ENCODE measurements at regions of chr20 and their contacts with region 1.

Region 1: GRCh38 chr20:63707549-63708300 is at the starts of genes ARFRP1 and ZGPAT:
- DNase-seq: peak; percentile 94
- ATAC-seq: peak; percentile 89
- H3K4me3 Mint-ChIP-seq: peak within 1 kb of the TSS; percentile 95
- H3K27ac Mint-ChIP-seq: peak within 1 kb of the TSS; percentile 90
- H3K4me1 Mint-ChIP-seq: peaks cover 44% of the 10 kb centered on the region
- H3K27me3 Mint-ChIP-seq: no peaks in the 10 kb centered on the region
- total RNA-seq, gene ARFRP1: 36.4 to 52.0 TPM
- total RNA-seq, gene ZGPAT: 15.3 to 21.9 TPM

Region 2: GRCh38 chr20:63734111-63734945 is 26.6 kb after region 1 on chr20:
- CTCF ChIA-PET with region 1: interaction called, 14 read pairs
- POLR2A ChIA-PET with region 1: interaction called, 10 read pairs
- intact Hi-C with region 1: loop called (anchors 2 kb)
- DNase-seq: no peak
- ATAC-seq: no peak
- H3K4me3 Mint-ChIP-seq: no peak overlapping the region
- H3K27ac Mint-ChIP-seq: no peak overlapping the region
- H3K4me1 Mint-ChIP-seq: peaks cover 21% of the 10 kb centered on the region
- H3K27me3 Mint-ChIP-seq: no peaks in the 10 kb centered on the region

Region 3: GRCh38 chr20:63782051-63782471 is 74.3 kb after region 1 on chr20:
- CTCF ChIA-PET with region 1: interaction called, 3 read pairs
- POLR2A ChIA-PET with region 1: no interaction called
- intact Hi-C with region 1: loop called (anchors 1 to 5 kb)
- DNase-seq: peak; percentile 84
- ATAC-seq: peak; percentile 94
- H3K4me3 Mint-ChIP-seq: no peak overlapping the region
- H3K27ac Mint-ChIP-seq: peak overlapping the region; percentile 28
- H3K4me1 Mint-ChIP-seq: peaks cover 19% of the 10 kb centered on the region
- H3K27me3 Mint-ChIP-seq: no peaks in the 10 kb centered on the region

Region 4: DNA sequence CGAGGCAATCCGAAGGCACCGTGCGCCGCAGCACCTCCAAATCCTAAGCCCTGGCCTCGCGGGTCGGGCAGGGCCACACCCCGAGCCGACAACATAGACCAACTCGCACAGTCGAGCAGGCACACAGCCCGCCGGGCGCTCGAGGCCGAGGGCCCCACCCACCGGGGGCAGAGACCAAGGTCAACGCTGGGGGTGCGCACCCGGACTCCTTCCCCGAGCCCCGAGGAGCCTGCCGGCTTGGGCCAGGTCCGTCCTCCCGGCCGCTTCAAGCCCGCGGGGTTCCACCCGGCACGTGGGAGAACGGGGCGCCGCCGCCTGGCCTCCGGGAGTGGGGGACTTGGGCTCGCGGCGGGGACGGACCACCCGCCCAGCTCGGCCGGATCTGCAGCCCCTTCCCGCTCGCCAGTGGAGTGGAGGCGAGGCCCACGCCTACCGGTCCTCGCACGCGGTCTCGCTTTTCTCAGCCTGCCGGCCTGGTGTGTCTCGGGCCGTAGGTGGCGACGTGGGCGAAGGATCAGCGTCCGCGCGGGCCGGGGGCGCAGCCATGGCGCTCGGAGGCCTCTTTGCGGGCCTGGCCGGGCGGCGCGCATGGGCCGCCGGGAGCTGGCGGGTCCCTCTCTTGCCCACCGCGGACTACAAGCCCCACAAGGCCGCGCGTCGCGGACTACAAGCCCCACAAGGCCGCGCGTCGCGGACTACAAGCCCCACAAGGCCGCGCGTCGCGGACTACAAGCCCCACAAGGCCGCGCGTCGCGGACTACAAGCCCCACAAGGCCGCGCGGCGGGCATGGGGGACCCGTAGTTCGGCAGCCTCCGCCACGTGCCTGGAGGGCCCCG is 248.3 kb after region 1 on chr20 and contains the start of gene UCKL1:
- CTCF ChIA-PET with region 1: no interaction called
- POLR2A ChIA-PET with region 1: interaction called, 3 read pairs
- intact Hi-C with region 1: loop called in 1 of 2 experiments (anchors 2 kb)
- DNase-seq: peak; percentile 95
- ATAC-seq: peak; percentile 78
- H3K4me3 Mint-ChIP-seq: peak within 1 kb of the TSS; percentile 77
- H3K27ac Mint-ChIP-seq: peak within 1 kb of the TSS; percentile 89
- H3K4me1 Mint-ChIP-seq: peaks cover 37% of the 10 kb centered on the region
- H3K27me3 Mint-ChIP-seq: no peaks in the 10 kb centered on the region
- total RNA-seq, gene UCKL1: 28.3 to 32.2 TPM

Measured in activated CD4-positive, alpha-beta T cell treated with anti-CD3 and anti-CD28 coated beads for 36 hours (primary cell).